CD8-positive, alpha-beta T cell (primary cell): ENCODE measurements at regions of chr1 and their contacts with region 1.

Region 1: GRCh38 chr1:35030756-35031446 is 844 bp downstream of the ZMYM6 start:
- DNase-seq: peak in 8 of 9 experiments; percentile 26 to 65 (median 56)
- ATAC-seq: peak; percentile 59
- H3K4me3 ChIP-seq: peak overlapping the region; percentile 92 to 97
- H3K4me3 Mint-ChIP-seq: peak overlapping the region; percentile 99
- H3K27ac ChIP-seq: peak overlapping the region; percentile 62 to 85
- H3K27ac Mint-ChIP-seq: peak overlapping the region; percentile 98
- H3K4me1 ChIP-seq: peaks cover 25% of the 10 kb centered on the region
- H3K4me1 Mint-ChIP-seq: peaks cover 49% of the 10 kb centered on the region
- H3K27me3 ChIP-seq: no peaks in the 10 kb centered on the region
- H3K27me3 Mint-ChIP-seq: no peaks in the 10 kb centered on the region
- CTCF ChIP-seq: no peak

Region 2: GRCh38 chr1:34865981-34866761 is 164.7 kb before region 1 on chr1:
- CTCF ChIA-PET with region 1: interaction called, 4 read pairs
- POLR2A ChIA-PET with region 1: no interaction called
- intact Hi-C with region 1: loop called (anchors 5 kb)
- DNase-seq: peak; percentile 83 to 98 (median 92)
- ATAC-seq: peak; percentile 82
- H3K4me3 ChIP-seq: peak overlapping the region; percentile 68 to 78
- H3K4me3 Mint-ChIP-seq: peak overlapping the region; percentile 88
- H3K27ac ChIP-seq: peak overlapping the region; percentile 67 to 87
- H3K27ac Mint-ChIP-seq: peak overlapping the region; percentile 87
- H3K4me1 ChIP-seq: peaks cover 56% of the 10 kb centered on the region
- H3K4me1 Mint-ChIP-seq: peaks cover 44% of the 10 kb centered on the region
- H3K27me3 ChIP-seq: no peaks in the 10 kb centered on the region
- H3K27me3 Mint-ChIP-seq: no peaks in the 10 kb centered on the region
- CTCF ChIP-seq: peak; percentile 97

Region 3: DNA sequence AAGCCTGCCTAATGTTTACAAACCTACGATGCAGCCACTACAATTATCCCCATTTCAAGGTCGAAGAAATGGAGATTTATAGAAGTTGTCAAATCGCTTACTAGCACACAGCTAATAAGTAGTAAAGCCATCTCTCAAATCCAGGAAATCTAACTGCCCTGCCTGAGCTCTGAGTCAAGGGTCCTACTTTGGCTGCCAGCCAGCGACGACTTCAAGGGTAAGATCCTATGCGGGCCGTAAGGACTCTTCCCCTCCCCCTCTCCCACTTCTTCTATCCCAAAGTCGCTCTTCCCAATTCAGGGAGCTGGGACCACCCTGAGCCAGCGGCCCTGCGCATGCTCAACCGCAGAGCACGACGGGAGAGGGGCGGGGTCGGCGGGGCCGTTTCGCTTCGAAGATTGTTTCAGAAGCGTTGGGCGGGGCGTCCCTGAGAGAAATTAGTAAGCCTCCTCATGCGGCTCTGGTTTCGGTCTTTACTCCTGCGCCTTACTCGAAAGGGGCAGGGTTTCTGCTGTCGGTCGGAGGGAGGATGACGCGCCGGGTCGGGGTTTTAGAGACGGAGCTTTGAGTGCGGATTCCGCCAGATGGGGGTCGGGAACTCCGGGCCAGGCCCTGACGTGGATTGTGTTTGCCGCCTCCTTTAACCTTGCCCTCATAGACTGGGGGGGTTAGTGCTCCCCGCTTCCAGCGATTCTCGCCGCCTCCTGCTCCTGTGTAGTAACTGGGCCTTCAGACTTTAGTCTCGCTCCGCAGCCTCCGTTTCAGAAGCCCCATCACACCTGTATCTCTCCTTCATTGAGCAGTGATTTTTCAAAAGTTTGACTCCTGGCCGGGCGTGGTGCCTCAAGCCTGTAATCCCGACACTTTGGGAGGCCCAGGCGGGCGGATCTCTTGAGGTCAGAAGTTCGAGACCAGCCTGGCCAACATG is 48.4 kb after region 1 on chr1 and contains the start of gene ZMYM1:
- CTCF ChIA-PET with region 1: no interaction called
- POLR2A ChIA-PET with region 1: interaction called, 4 read pairs
- intact Hi-C with region 1: loop called (anchors 1 kb)
- DNase-seq: peak; percentile 49 to 89 (median 84)
- ATAC-seq: peak; percentile 92
- H3K4me3 ChIP-seq: peak within 1 kb of the TSS; percentile 82 to 83
- H3K4me3 Mint-ChIP-seq: peak within 1 kb of the TSS; percentile 98
- H3K27ac ChIP-seq: peak within 1 kb of the TSS; percentile 85 to 95
- H3K27ac Mint-ChIP-seq: peak within 1 kb of the TSS; percentile 99
- H3K4me1 ChIP-seq: peaks cover 16% of the 10 kb centered on the region
- H3K4me1 Mint-ChIP-seq: peaks cover 37% of the 10 kb centered on the region
- H3K27me3 ChIP-seq: no peaks in the 10 kb centered on the region
- H3K27me3 Mint-ChIP-seq: peaks cover 8% of the 10 kb centered on the region
- CTCF ChIP-seq: no peak
- total RNA-seq, gene ZMYM1: 3.7 to 6.0 TPM

Region 4: DNA sequence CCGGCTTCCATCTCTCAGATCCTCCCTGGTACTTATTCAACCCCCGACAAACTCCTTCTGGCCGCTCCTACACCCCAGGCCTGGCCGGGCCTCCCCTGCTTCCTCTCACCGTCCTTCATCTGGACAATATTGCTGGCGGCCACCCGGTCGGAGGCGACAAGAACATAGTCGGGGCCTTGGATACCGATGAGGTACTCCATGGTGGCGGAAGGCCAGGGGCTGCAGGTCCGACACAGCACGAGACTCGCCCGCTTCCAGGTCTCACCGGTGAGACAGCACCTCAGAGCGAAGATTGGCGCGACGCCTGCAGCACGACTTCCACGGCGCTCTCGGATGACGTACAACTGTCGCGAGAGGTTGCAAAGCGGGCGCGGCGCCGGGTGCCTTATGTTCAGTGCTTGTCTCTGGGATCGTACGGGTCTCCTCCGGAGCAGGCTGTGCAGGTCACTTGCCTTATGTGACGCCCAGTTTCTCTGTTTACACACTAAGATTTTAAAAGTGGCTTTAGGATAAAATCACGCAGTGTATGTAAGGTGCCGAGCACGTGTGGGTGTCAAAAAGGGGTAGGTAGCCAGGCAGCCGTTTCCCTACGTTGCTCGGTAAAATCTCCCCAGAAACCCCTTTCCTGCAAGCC is 610.4 kb after region 1 on chr1 and contains the start of gene PSMB2:
- CTCF ChIA-PET with region 1: no interaction called
- POLR2A ChIA-PET with region 1: no interaction called
- intact Hi-C with region 1: loop called in 1 of 2 experiments (anchors 5 kb)
- DNase-seq: peak; percentile 91 to 99 (median 97)
- ATAC-seq: peak; percentile 94
- H3K4me3 ChIP-seq: peak within 1 kb of the TSS; percentile 94 to 97
- H3K4me3 Mint-ChIP-seq: peak within 1 kb of the TSS; percentile 100
- H3K27ac ChIP-seq: peak within 1 kb of the TSS; percentile 89 to 93
- H3K27ac Mint-ChIP-seq: peak within 1 kb of the TSS; percentile 97
- H3K4me1 ChIP-seq: peaks cover 33% of the 10 kb centered on the region
- H3K4me1 Mint-ChIP-seq: peaks cover 37% of the 10 kb centered on the region
- H3K27me3 ChIP-seq: peaks cover 0 to 8% of the 10 kb centered on the region in 2 experiments
- H3K27me3 Mint-ChIP-seq: peaks cover 16% of the 10 kb centered on the region
- CTCF ChIP-seq: no peak
- total RNA-seq, gene PSMB2: 36.8 to 38.8 TPM

Region 5: DNA sequence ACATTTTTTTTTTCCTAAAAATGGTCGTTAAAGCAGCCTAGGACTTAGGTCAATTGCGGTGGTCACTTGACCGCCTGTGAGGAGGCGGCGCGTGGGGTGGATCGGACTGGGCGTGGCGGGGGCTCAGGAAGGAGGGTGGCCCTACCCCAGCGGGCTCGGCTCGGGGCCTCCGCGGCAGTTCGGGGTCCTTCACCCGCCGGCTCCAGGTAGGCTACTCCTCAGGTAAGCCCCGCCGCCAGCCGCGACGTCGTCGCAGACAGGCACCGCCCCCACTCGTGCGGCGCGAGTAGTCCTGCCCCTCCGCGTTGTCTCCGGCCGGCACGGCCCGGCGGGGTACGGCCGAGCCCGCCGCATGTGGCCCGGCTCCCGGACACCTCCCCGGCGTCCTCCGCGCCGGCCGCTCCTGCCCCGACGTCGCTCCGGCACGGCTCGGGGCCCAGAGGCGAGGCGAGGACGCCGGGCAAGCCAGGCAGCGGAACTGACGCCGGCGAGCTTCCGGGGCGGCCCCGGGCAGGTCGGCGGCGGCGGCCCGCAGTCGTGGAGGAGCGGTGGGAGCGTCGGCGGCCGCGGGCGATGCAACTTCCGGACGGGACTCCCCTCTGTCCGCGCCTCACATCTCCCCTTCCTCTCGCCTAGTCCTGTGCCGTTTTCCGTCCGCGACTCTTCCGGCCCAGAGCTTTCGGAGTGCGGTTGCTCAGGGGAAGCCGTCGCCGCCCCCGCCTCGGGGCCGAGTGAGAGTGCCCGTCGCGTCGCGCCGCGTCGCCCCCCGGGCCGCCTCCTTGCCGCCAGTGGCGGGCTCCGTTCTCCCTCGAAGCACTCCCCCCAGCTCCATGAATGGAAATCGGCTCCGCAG is 899.9 kb after region 1 on chr1 and contains the start of gene AGO3:
- CTCF ChIA-PET with region 1: no interaction called
- POLR2A ChIA-PET with region 1: no interaction called
- intact Hi-C with region 1: loop called (anchors 5 kb)
- DNase-seq: peak; percentile 70 to 97 (median 84)
- ATAC-seq: peak; percentile 79
- H3K4me3 ChIP-seq: peak within 1 kb of the TSS; percentile 66 to 93
- H3K4me3 Mint-ChIP-seq: peak within 1 kb of the TSS; percentile 94
- H3K27ac ChIP-seq: peak within 1 kb of the TSS; percentile 96
- H3K27ac Mint-ChIP-seq: peak within 1 kb of the TSS; percentile 98
- H3K4me1 ChIP-seq: peaks cover 28% of the 10 kb centered on the region
- H3K4me1 Mint-ChIP-seq: peaks cover 35% of the 10 kb centered on the region
- H3K27me3 ChIP-seq: no peaks in the 10 kb centered on the region
- H3K27me3 Mint-ChIP-seq: no peaks in the 10 kb centered on the region
- CTCF ChIP-seq: no peak
- total RNA-seq, gene AGO3: 27.6 to 30.2 TPM